ENCODE measurements at regions of chr2 and their contacts with region 1.

Region 1: DNA sequence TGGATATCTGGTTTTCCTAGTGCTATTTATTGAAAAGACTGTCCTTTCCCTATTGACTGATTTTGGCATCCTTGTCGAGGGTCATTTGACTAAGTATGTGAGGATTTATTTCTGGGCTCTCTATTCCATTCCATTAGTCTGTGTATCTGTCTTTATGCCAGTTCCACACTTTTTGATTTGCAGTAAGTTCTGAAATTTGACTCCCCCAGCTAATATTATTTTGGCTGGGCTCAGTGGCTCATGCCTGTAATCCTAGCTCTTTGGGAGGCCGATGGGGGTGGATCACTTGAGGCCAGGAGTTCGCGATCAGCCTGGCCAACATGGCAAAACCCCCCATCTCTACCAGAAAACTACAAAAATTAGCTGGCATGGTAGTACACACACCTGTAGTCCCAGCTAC is 46.8 kb upstream of the GAREM2 start:
- DNase-seq: no peak
- ATAC-seq: no peak
- H3K4me3 ChIP-seq: no peak overlapping the region
- H3K27ac ChIP-seq: no peak overlapping the region
- H3K4me1 ChIP-seq: no peaks in the 10 kb centered on the region
- H3K27me3 ChIP-seq: no peaks in the 10 kb centered on the region
- CTCF ChIP-seq: no peak
- POLR2A ChIP-seq: no peak
- RAD21 ChIP-seq: no peak

Region 2: GRCh38 chr2:26088032-26088643 is 37.9 kb before region 1 on chr2:
- CTCF ChIA-PET with region 1: no interaction called
- POLR2A ChIA-PET with region 1: no interaction called
- dilution Hi-C with region 1: no loop called
- in situ Hi-C with region 1: no loop called
- intact Hi-C with region 1: loop called (anchors 5 kb)
- DNase-seq: peak; percentile 36
- ATAC-seq: peak; percentile 82
- H3K4me3 ChIP-seq: no peak overlapping the region
- H3K27ac ChIP-seq: no peak overlapping the region
- H3K4me1 ChIP-seq: no peaks in the 10 kb centered on the region; the same call in 1 of the 2 replicates
- H3K27me3 ChIP-seq: no peaks in the 10 kb centered on the region
- CTCF ChIP-seq: peak; percentile 63
- POLR2A ChIP-seq: no peak
- RAD21 ChIP-seq: peak; percentile 64

Region 3: DNA sequence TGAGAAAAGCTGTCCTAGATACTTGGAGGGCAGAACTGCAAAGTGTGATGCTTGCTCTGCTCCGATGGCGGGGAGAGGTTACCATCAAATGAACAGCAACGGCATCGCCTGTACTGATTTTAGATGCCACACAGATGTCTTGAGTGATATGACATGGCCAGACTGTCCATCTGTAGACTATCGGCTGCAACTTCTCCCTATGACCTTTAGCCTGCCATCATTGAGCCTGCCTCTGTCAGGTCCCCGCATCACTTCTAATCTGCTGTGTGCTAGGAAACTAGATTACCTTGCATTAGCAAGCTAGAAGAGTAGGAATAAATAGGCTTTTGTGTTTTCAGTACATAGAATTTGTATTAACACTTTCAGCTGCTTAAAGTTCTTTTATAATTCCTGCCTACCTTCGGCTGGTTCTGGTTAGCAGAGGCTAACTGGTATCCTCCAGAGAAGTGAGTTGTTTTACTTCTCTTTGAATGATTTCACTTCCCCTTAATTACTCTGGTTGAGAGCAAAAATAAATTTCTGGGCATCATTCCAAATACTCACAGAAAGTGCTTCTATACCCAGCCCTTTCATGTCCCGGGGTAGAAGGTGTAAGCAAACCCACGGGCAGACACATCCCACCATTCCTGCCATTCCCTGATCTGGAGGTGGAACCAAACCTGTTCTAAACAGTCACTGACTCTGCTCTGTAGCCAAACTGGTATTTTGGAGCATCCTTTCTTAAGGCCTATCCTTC is 70.8 kb after region 1 on chr2:
- CTCF ChIA-PET with region 1: no interaction called
- POLR2A ChIA-PET with region 1: no interaction called
- dilution Hi-C with region 1: no loop called
- in situ Hi-C with region 1: no loop called
- intact Hi-C with region 1: no loop called
- DNase-seq: no peak
- ATAC-seq: no peak
- H3K4me3 ChIP-seq: no peak overlapping the region
- H3K27ac ChIP-seq: no peak overlapping the region
- H3K4me1 ChIP-seq: no peaks in the 10 kb centered on the region
- H3K27me3 ChIP-seq: no peaks in the 10 kb centered on the region
- CTCF ChIP-seq: no peak
- POLR2A ChIP-seq: no peak
- RAD21 ChIP-seq: no peak

Region 4: DNA sequence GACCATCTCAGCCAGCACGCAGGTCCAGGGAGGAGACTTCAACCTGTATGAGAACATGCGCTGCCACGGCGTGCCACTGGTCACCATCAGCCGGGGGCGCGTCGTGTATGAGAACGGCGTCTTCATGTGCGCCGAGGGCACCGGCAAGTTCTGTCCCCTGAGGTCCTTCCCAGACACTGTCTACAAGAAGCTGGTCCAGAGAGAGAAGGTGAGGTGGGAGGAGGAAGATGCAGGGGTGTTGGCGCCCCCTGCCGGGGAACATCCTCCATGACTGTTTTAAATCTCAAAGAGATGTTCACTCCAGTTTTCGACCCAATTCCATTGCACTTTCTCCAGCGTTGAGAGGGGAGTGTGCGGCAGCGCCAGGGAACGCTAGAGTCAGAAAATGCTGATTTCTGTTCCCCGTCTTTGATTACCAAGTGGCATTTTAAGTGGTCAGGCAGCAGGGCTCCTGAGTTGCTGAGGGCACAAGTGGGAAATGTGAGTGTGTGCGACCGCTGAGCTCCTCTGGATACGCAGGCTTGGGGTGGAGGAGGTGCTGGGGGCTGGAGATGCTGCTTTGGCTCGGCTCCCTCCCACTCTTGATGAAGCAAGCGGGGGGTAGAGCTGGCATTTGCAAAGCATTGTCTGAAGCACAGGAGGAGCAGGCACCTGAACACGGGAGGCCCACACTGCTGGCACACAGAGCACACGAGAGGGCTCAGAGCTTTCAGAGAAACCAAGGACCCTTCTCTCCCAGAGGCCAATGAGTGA is 816.6 kb after region 1 on chr2:
- CTCF ChIA-PET with region 1: no interaction called
- POLR2A ChIA-PET with region 1: no interaction called
- dilution Hi-C with region 1: no loop called
- in situ Hi-C with region 1: no loop called
- intact Hi-C with region 1: no loop called
- DNase-seq: peak; percentile 48
- ATAC-seq: peak; percentile 63
- H3K4me3 ChIP-seq: no peak overlapping the region
- H3K27ac ChIP-seq: no peak overlapping the region
- H3K4me1 ChIP-seq: peaks cover 2% of the 10 kb centered on the region; the same call in 1 of the 2 replicates
- H3K27me3 ChIP-seq: peaks cover 46% of the 10 kb centered on the region
- CTCF ChIP-seq: peak; percentile 75
- POLR2A ChIP-seq: no peak
- RAD21 ChIP-seq: peak; percentile 72